Activated CD8-positive, alpha-beta T cell treated with anti-CD3 and anti-CD28 coated beads, Interleukin-2, amount 10 ng/mL, durations not matched to agents 7 days and 5 days (primary cell): ENCODE measurements at regions of chr5 and their contacts with region 1.

Region 1: GRCh38 chr5:115544436-115545350 is at the start of gene FEM1C:
- DNase-seq: peak; percentile 97
- ATAC-seq: peak; percentile 95
- H3K4me3 Mint-ChIP-seq: peak within 1 kb of the TSS; percentile 99
- H3K27ac Mint-ChIP-seq: peak within 1 kb of the TSS; percentile 99
- H3K4me1 Mint-ChIP-seq: peaks cover 42% of the 10 kb centered on the region
- H3K27me3 Mint-ChIP-seq: no peaks in the 10 kb centered on the region
- total RNA-seq, gene FEM1C: 13.6 to 15.0 TPM

Region 2: DNA sequence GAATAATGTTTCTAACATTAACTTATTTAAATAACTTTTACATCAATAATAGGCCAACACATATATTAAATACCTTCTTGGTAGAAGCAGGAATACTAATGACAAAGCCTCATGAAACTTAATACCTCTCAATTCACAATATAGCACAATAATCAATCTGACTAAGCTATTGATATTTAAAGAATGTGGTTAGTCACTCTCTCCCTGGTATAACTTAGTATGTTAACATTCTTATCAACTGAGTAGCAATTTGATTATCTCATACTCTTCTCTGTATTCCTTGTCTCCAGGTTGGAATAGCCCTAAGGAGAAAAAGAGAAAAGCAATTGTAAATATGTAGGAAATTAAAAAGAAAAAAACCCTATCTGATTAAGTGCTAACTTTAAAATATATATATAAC is 277.1 kb before region 1 on chr5:
- CTCF ChIA-PET with region 1: no interaction called
- POLR2A ChIA-PET with region 1: no interaction called
- DNase-seq: no peak
- ATAC-seq: no peak
- H3K4me3 Mint-ChIP-seq: no peak overlapping the region
- H3K27ac Mint-ChIP-seq: no peak overlapping the region
- H3K4me1 Mint-ChIP-seq: peaks cover 5% of the 10 kb centered on the region
- H3K27me3 Mint-ChIP-seq: peaks cover 11% of the 10 kb centered on the region

Region 3: GRCh38 chr5:115296124-115297022 is 248.3 kb before region 1 on chr5 and contains the start of gene CCDC112:
- CTCF ChIA-PET with region 1: no interaction called
- POLR2A ChIA-PET with region 1: no interaction called
- DNase-seq: peak; percentile 76
- ATAC-seq: peak; percentile 88
- H3K4me3 Mint-ChIP-seq: peak within 1 kb of the TSS; percentile 67
- H3K27ac Mint-ChIP-seq: no peak within 1 kb of the TSS
- H3K4me1 Mint-ChIP-seq: peaks cover 5% of the 10 kb centered on the region
- H3K27me3 Mint-ChIP-seq: peaks cover 47% of the 10 kb centered on the region
- total RNA-seq, gene CCDC112: 0.50 to 0.71 TPM

Region 4: GRCh38 chr5:115841382-115842088 is 296.8 kb after region 1 on chr5 and contains the starts of genes AP3S1 and ATG12:
- CTCF ChIA-PET with region 1: interaction called, 7 read pairs
- POLR2A ChIA-PET with region 1: interaction called, 13 read pairs
- DNase-seq: peak; percentile 94
- ATAC-seq: peak; percentile 89
- H3K4me3 Mint-ChIP-seq: peak within 1 kb of the TSS; percentile 98
- H3K27ac Mint-ChIP-seq: peak within 1 kb of the TSS; percentile 100
- H3K4me1 Mint-ChIP-seq: peaks cover 55% of the 10 kb centered on the region
- H3K27me3 Mint-ChIP-seq: no peaks in the 10 kb centered on the region
- total RNA-seq, gene AP3S1: 76.6 to 78.3 TPM
- total RNA-seq, gene ATG12: 35.9 to 43.9 TPM